IMR-90 (cell line): ENCODE measurements at regions of chr22 and their contacts with region 1.

Region 1: GRCh38 chr22:31970490-31971444 is 26.4 kb downstream of the YWHAH start:
- DNase-seq: peak; percentile 51
- ATAC-seq: peak; percentile 99
- H3K4me3 ChIP-seq: peak overlapping the region; percentile 47
- H3K27ac ChIP-seq: no peak overlapping the region
- H3K4me1 ChIP-seq: no peaks in the 10 kb centered on the region
- H3K27me3 ChIP-seq: no peaks in the 10 kb centered on the region; the same call in 1 of the 2 replicates
- CTCF ChIP-seq: peak; percentile 91
- POLR2A ChIP-seq: no peak
- RAD21 ChIP-seq: peak; percentile 74

Region 2: GRCh38 chr22:31561238-31561887 is 409.4 kb before region 1 on chr22:
- CTCF ChIA-PET with region 1: no interaction called
- POLR2A ChIA-PET with region 1: no interaction called
- dilution Hi-C with region 1: no loop called
- in situ Hi-C with region 1: loop called (anchors 25 kb)
- intact Hi-C with region 1: loop called (anchors 5 kb)
- DNase-seq: peak; percentile 77
- ATAC-seq: peak; percentile 100
- H3K4me3 ChIP-seq: no peak overlapping the region
- H3K27ac ChIP-seq: no peak overlapping the region
- H3K4me1 ChIP-seq: no peaks in the 10 kb centered on the region; the same call in 1 of the 2 replicates
- H3K27me3 ChIP-seq: no peaks in the 10 kb centered on the region
- CTCF ChIP-seq: peak; percentile 86
- POLR2A ChIP-seq: 0 out of 2 replicates have a peak, but pooled peaks have one; percentile 20
- RAD21 ChIP-seq: peak; percentile 85

Region 3: DNA sequence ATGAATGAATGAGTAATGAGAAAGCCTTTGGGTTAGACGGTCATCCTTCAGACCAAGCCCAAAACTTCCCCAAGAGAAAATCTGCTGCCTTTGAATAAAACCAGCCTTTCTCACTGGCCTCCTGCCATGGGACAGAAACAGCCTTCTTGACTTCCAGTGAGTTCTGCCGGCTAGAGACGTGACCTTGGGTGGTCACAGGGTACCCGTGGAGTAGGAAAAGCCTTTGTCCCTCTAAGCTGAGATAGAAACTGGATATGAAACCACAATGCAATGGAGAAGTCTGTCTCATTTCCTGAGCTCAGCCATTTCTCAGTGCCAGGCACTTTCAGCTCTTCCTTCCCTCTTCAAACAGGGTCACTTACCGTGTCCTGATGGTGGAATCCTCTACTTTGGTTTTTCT is 47.6 kb before region 1 on chr22:
- CTCF ChIA-PET with region 1: no interaction called
- POLR2A ChIA-PET with region 1: no interaction called
- dilution Hi-C with region 1: no loop called
- in situ Hi-C with region 1: no loop called
- intact Hi-C with region 1: no loop called
- DNase-seq: no peak
- ATAC-seq: no peak; the same call in 1 of the 2 replicates
- H3K4me3 ChIP-seq: no peak overlapping the region
- H3K27ac ChIP-seq: no peak overlapping the region
- H3K4me1 ChIP-seq: no peaks in the 10 kb centered on the region
- H3K27me3 ChIP-seq: peaks cover 20% of the 10 kb centered on the region
- CTCF ChIP-seq: no peak
- POLR2A ChIP-seq: no peak
- RAD21 ChIP-seq: no peak